Activated CD4-positive, alpha-beta memory T cell treated with anti-CD3 and anti-CD28 coated beads for 36 hours (primary cell): ENCODE measurements at regions of chr9 and their contacts with region 1.

Region 1: GRCh38 chr9:84397151-84397728 is 56.7 kb upstream of the SLC28A3 start:
- DNase-seq: peak; percentile 75
- H3K4me3 Mint-ChIP-seq: no peak overlapping the region
- H3K27ac Mint-ChIP-seq: no peak overlapping the region
- H3K4me1 Mint-ChIP-seq: no peaks in the 10 kb centered on the region
- H3K27me3 Mint-ChIP-seq: no peaks in the 10 kb centered on the region

Region 2: DNA sequence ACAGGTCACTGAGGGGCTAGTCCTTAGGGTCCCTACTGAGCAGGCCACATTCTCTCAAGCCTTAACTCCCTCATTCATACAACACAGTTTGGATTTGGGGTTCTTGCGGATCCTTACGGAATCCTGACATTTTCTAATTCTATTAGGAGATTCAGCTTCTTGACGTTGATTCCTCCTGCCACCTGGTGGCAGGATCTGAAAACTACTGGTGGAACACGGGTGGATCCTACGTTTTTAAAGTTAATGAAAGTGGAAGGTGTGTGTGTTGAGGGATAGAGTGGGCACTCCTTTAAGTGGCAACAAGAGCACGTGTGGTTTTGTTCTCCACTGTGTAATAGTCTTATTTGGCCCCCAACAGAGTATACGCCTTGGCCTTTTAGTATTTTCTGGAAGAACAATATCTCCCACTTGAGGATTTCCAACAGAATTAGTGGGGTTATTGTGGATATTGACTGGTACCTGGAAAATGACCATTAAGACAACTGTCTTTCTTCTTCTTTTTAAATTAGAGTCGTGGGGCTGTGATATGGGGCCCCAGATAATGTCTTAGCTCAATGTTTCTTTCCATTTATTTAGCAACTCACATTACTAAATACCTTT is 81.9 kb before region 1 on chr9:
- CTCF ChIA-PET with region 1: no interaction called
- POLR2A ChIA-PET with region 1: no interaction called
- intact Hi-C with region 1: no loop called
- DNase-seq: peak; percentile 70
- H3K4me3 Mint-ChIP-seq: no peak overlapping the region
- H3K27ac Mint-ChIP-seq: no peak overlapping the region
- H3K4me1 Mint-ChIP-seq: peaks cover 6% of the 10 kb centered on the region
- H3K27me3 Mint-ChIP-seq: no peaks in the 10 kb centered on the region

Region 3: DNA sequence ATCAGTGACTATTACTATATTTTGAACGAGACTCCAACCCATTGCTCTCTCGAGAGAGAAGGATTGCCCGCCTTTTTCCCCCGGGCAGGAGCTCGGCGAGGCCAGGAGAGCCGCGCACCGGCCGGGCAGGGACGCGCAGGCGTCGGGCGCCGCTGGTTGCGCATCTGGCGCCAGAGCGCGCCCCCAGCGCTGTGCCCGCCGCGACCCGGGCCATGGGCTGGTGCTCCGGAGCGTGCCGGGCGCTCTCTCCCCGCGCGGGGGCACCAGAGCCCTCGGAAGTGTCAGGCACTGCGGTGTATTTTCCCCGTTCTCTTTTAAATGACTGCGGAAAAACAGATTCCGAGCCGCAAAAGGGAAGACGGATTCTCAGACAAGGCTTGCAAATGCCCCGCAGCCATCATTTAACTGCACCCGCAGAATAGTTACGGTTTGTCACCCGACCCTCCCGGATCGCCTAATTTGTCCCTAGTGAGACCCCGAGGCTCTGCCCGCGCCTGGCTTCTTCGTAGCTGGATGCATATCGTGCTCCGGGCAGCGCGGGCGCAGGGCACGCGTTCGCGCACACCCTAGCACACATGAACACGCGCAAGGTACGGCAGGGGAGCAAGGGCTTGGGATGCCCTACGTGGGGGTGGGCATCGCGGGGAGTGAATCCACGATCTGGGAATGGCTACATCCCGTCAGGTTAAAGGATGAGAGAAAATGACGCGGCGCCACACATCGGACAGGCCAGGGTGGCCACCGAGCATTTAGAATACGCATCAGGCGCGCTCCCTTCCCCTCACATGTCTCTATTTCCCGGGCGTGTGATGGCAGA is 271.2 kb after region 1 on chr9:
- CTCF ChIA-PET with region 1: no interaction called
- POLR2A ChIA-PET with region 1: no interaction called
- intact Hi-C with region 1: loop called (anchors 10 kb)
- DNase-seq: peak; percentile 63
- H3K4me3 Mint-ChIP-seq: peak overlapping the region; percentile 48
- H3K27ac Mint-ChIP-seq: no peak overlapping the region
- H3K4me1 Mint-ChIP-seq: peaks cover 20% of the 10 kb centered on the region
- H3K27me3 Mint-ChIP-seq: peaks cover 46% of the 10 kb centered on the region

Region 4: GRCh38 chr9:84697509-84698114 is 300.4 kb after region 1 on chr9:
- CTCF ChIA-PET with region 1: interaction called, 7 read pairs
- POLR2A ChIA-PET with region 1: no interaction called
- intact Hi-C with region 1: loop called (anchors 10 kb)
- DNase-seq: peak; percentile 72
- H3K4me3 Mint-ChIP-seq: no peak overlapping the region
- H3K27ac Mint-ChIP-seq: no peak overlapping the region
- H3K4me1 Mint-ChIP-seq: peaks cover 4% of the 10 kb centered on the region
- H3K27me3 Mint-ChIP-seq: peaks cover 3% of the 10 kb centered on the region

Region 5: GRCh38 chr9:84759300-84759750 is 362.1 kb after region 1 on chr9:
- CTCF ChIA-PET with region 1: no interaction called
- POLR2A ChIA-PET with region 1: no interaction called
- intact Hi-C with region 1: loop called (anchors 10 kb)
- DNase-seq: peak; percentile 65
- H3K4me3 Mint-ChIP-seq: peak overlapping the region; percentile 6
- H3K27ac Mint-ChIP-seq: peak overlapping the region; percentile 74
- H3K4me1 Mint-ChIP-seq: peaks cover 47% of the 10 kb centered on the region
- H3K27me3 Mint-ChIP-seq: no peaks in the 10 kb centered on the region

Region 6: GRCh38 chr9:84897362-84898094 is 500.3 kb after region 1 on chr9:
- CTCF ChIA-PET with region 1: no interaction called
- POLR2A ChIA-PET with region 1: no interaction called
- intact Hi-C with region 1: no loop called
- DNase-seq: no peak
- H3K4me3 Mint-ChIP-seq: no peak overlapping the region
- H3K27ac Mint-ChIP-seq: no peak overlapping the region
- H3K4me1 Mint-ChIP-seq: no peaks in the 10 kb centered on the region
- H3K27me3 Mint-ChIP-seq: peaks cover 2% of the 10 kb centered on the region

Region 7: GRCh38 chr9:84953797-84954705 is 556.8 kb after region 1 on chr9:
- CTCF ChIA-PET with region 1: no interaction called
- POLR2A ChIA-PET with region 1: no interaction called
- intact Hi-C with region 1: loop called (anchors 5 kb)
- DNase-seq: peak; percentile 70
- H3K4me3 Mint-ChIP-seq: no peak overlapping the region
- H3K27ac Mint-ChIP-seq: no peak overlapping the region
- H3K4me1 Mint-ChIP-seq: no peaks in the 10 kb centered on the region
- H3K27me3 Mint-ChIP-seq: peaks cover 10% of the 10 kb centered on the region

Region 8: DNA sequence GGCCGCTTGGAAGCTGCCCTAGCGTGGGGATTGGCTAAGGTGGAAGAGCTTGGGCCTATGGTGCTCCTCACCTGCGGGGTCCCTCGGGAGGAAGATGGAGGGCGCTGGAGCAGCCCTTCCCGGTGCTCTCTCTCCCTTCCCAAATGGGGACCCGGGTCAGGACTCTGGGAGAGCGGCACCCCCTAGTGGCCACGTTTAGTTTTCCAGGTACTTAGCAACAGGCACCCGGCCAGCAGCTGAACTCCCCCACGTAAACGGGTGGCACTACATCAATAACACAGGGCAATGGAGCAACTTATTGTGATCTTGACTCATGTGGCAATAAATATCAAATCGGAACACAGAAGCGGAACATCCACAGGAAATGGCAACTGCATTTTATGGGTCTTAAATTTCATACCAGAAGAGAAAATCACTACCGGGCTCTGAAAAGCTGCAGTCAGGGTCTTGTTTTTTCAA is 1027.9 kb after region 1 on chr9:
- CTCF ChIA-PET with region 1: interaction called, 15 read pairs
- POLR2A ChIA-PET with region 1: no interaction called
- intact Hi-C with region 1: no loop called
- DNase-seq: peak; percentile 63
- H3K4me3 Mint-ChIP-seq: no peak overlapping the region
- H3K27ac Mint-ChIP-seq: no peak overlapping the region
- H3K4me1 Mint-ChIP-seq: no peaks in the 10 kb centered on the region
- H3K27me3 Mint-ChIP-seq: peaks cover 14% of the 10 kb centered on the region

Region 9: DNA sequence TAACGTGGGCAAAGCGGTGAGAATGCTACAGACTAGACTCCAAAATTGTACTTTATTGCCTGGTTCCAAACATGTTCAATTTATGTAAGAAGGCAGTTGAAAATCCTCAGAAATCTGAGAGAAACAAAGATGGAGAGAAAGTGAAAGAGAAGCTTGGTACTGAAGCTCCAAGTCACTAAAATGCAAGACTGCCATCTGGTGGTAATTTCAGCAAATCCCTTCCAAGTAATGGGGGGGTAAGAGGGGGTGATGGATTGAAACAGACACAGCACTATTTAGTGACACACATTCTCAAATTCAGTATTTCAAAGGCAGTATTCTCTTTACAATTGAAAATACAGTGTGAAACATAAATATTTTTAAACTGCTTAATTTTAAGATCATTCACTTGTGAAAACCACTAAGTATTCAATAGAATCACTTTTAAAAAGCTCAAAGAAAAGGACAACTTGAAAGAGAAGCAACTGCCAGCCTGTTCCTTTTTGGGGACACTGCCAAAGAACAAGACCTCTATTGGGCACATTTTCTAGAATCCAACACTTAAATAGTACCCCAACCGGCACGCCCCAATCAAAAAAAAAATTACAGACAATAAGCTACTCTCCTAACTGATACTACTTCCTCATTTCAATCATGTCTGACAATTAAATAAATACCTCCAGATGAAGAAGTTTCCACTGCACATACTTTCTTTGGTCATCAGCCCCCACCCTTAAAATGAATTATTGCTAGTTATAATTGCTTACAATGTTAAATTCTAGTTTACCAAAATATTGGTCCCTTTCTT is 1213.0 kb after region 1 on chr9:
- CTCF ChIA-PET with region 1: interaction called, 28 read pairs
- POLR2A ChIA-PET with region 1: no interaction called
- intact Hi-C with region 1: loop called (anchors 1 kb)
- DNase-seq: peak; percentile 19
- H3K4me3 Mint-ChIP-seq: peak overlapping the region; percentile 17
- H3K27ac Mint-ChIP-seq: peak overlapping the region; percentile 1
- H3K4me1 Mint-ChIP-seq: peaks cover 6% of the 10 kb centered on the region
- H3K27me3 Mint-ChIP-seq: no peaks in the 10 kb centered on the region